ENCODE measurements at regions of chr19 and their contacts with region 1.

Region 1: GRCh38 chr19:32357720-32358119 is 12.3 kb downstream of the ZNF507 start:
- DNase-seq: no peak
- H3K4me3 Mint-ChIP-seq: no peak overlapping the region
- H3K27ac Mint-ChIP-seq: no peak overlapping the region
- H3K4me1 Mint-ChIP-seq: peaks cover 2% of the 10 kb centered on the region
- H3K27me3 Mint-ChIP-seq: no peaks in the 10 kb centered on the region
- CTCF ChIP-seq: no peak

Region 2: GRCh38 chr19:32339988-32340874 is 17.5 kb before region 1 on chr19:
- CTCF ChIA-PET with region 1: interaction called, 32 read pairs
- POLR2A ChIA-PET with region 1: interaction called, 11 read pairs
- intact Hi-C with region 1: no loop called
- DNase-seq: peak; percentile 50
- H3K4me3 Mint-ChIP-seq: no peak overlapping the region
- H3K27ac Mint-ChIP-seq: no peak overlapping the region
- H3K4me1 Mint-ChIP-seq: peaks cover 6% of the 10 kb centered on the region
- H3K27me3 Mint-ChIP-seq: no peaks in the 10 kb centered on the region
- CTCF ChIP-seq: peak; percentile 55